ENCODE measurements at regions of chr3 and their contacts with region 1.

Region 1: DNA sequence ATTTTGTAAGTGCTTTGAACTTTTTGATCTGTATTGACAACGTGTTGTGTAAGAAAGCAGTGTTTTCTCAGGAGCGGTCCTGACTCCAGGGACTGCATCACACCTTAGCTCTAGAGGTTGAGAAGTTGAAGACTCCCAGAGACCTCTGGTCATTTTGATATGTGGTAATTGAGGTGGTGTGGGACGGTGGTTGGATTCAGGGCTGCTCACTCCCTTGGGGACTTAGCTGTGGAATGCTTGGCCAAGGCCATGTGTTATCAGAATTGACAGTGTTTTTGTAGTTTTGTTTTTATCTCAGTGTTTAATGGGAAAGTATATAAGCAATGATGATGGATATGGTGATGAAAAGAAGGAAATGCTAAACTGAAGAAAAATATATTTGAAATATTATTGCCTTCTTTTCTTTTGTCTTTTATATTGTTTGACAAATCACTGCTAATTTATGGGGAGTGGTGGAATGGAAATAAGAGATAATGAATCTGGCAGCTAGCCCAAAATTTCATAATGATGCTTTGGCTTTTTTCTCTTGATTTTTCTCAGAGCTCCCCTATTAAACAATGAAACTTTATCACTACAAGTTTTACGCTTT is 16.0 kb downstream of the CMSS1 start:
- DNase-seq: no peak
- H3K4me3 ChIP-seq: no peak overlapping the region
- CTCF ChIP-seq: no peak

Region 2: DNA sequence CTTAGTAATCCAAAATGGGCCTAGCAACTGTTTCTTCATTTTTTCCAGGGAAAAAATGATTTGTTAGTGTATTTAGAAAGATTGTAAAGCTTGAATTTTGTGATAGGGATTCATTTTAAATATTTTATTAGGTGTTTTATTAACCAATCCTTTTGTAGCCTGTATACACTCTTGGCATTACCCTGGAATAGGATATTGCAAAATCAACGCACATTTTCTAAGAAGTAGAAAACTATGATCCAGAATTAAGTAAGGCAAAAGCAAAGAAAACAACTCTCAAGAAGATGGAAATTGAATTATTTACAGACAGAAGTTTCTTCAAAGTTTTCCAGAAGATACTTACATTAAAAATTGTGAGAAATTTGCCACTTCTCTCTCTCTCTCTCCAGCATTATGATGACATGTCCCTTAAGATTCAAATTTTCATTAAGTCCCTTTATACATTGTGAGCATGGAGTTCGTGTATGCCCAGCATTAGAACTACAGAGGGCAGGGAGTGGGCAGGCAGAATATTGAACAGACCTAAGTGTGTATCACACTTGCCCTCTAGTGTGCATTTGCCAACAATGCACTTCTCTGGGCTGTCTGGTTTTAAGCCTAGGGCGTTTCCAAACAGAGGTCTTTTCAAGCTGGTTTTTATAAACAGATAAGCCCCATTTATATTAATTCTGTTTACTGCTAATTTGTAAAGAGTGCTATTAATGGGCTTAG is 44.5 kb before region 1 on chr3:
- CTCF ChIA-PET with region 1: no interaction called
- POLR2A ChIA-PET with region 1: no interaction called
- DNase-seq: no peak
- H3K4me3 ChIP-seq: no peak overlapping the region
- CTCF ChIP-seq: peak; percentile 67

Region 3: GRCh38 chr3:100041328-100041749 is 207.6 kb after region 1 on chr3:
- CTCF ChIA-PET with region 1: interaction called, 14 read pairs
- POLR2A ChIA-PET with region 1: interaction called, 3 read pairs
- DNase-seq: peak; percentile 67
- H3K4me3 ChIP-seq: no peak overlapping the region
- CTCF ChIP-seq: no peak

Region 4: GRCh38 chr3:100089812-100090668 is 256.3 kb after region 1 on chr3:
- CTCF ChIA-PET with region 1: interaction called, 21 read pairs
- POLR2A ChIA-PET with region 1: no interaction called
- DNase-seq: no peak
- H3K4me3 ChIP-seq: no peak overlapping the region
- CTCF ChIP-seq: peak; percentile 67

Region 5: DNA sequence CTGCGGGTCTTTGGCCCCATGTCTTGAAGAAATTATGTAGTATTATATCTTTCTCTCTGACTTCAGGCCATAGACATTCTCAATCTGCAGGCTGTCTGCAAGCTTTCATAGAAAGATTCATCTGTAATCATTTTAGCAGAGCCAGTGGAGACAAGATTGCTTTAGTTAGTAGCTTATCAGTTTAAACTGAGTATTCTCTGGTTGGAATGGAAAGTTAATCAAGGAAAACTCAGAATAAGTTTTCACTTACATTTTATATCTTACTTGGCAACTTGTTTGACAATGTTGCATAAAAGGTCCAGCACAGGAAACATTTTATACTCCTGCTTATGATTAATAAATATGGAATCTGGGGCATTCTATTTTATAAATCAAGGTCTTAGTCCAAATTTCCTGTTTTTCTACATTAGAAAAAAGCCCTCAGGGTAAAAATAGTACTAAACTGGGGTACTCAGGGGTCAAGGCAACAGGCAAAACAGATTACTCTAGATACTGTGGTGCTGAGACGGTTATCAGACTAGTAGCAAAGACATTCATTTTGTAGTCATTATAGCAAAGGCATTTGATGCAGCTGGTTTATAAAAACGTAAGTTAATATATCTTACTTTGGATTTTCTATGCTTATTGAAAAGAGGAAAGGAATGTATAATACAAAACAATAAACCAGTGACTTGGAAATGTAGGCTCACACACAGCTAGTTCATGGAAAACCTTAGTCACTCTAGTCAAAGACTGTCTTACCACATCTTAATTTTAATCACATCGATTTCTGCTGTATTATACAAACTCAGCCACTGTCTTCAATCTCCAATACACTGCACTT is 325.8 kb after region 1 on chr3:
- CTCF ChIA-PET with region 1: no interaction called
- POLR2A ChIA-PET with region 1: no interaction called
- DNase-seq: peak; percentile 46
- H3K4me3 ChIP-seq: no peak overlapping the region
- CTCF ChIP-seq: no peak

Region 6: GRCh38 chr3:100254168-100254777 is 420.6 kb after region 1 on chr3:
- CTCF ChIA-PET with region 1: interaction called, 94 read pairs
- POLR2A ChIA-PET with region 1: no interaction called
- DNase-seq: peak; percentile 44
- H3K4me3 ChIP-seq: no peak overlapping the region
- CTCF ChIP-seq: peak; percentile 64

Region 7: GRCh38 chr3:100260685-100261484 is 427.2 kb after region 1 on chr3 and contains the start of gene TBC1D23:
- CTCF ChIA-PET with region 1: interaction called, 94 read pairs
- POLR2A ChIA-PET with region 1: interaction called, 5 read pairs
- DNase-seq: peak; percentile 98
- H3K4me3 ChIP-seq: peak within 1 kb of the TSS; percentile 97
- CTCF ChIP-seq: no peak

Region 8: DNA sequence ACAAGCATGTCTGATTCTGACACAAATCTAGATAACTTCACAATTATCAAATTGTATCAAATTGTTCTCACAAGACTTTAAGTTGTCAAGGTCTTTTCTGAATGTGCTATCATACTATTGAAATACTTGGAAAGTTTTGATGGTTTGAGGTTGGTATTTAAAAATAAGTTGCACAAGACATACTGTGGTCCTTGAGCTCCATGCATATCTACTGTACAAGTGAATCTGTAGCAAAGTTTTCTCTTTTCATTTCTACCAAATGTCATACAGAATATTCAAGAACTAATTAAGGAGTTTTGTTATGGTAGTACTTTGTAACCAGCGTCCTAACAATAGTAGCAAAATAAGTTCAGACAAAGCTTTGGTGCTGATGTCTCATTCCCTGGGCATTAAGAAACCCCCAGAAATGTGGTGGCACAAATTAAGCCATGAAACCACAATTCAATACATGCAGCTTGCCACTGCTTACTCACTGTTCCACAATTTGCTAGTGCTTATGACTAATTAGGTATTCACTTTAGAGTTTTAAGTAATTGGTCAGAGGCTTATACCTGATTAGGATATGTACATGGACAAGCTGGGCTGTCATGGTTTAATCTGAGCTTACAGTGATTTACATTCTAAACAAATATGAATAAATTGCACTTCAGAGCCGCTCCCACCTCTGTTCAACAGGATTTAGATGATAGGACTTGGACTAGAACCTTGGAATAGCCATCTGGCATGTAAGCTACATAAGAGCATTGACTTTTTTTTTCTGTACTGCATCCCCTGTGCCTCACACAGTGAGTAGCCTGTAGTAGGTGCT is 435.9 kb after region 1 on chr3:
- CTCF ChIA-PET with region 1: interaction called, 13 read pairs
- POLR2A ChIA-PET with region 1: no interaction called
- DNase-seq: peak; percentile 93
- H3K4me3 ChIP-seq: no peak overlapping the region
- CTCF ChIP-seq: no peak

Region 9: DNA sequence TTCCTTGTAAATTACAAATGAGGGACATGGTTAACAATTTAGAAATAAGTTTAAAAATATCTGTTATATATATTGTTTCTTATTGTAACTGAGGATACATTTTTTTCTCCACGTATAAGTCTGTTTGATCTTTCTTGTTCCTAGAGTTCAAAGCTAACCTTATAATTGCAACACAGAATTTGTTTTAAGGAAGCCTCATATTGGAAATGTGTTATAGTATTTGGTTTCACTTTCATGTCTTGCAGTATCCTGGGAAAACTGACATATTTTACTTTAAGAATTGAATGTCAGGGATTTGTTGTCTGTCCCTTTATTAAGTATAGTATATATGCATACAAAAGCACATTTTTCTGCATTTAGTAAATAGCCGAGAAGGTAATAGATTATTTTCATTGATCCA is 477.3 kb after region 1 on chr3:
- CTCF ChIA-PET with region 1: interaction called, 16 read pairs
- POLR2A ChIA-PET with region 1: interaction called, 4 read pairs
- DNase-seq: no peak
- H3K4me3 ChIP-seq: no peak overlapping the region
- CTCF ChIP-seq: no peak